ENCODE measurements at regions of chr14 and their contacts with region 1.

Region 1: GRCh38 chr14:95319312-95320021 is at the start of gene CLMN:
- DNase-seq: peak; percentile 64
- H3K4me3 Mint-ChIP-seq: peak within 1 kb of the TSS; percentile 97
- H3K27ac Mint-ChIP-seq: peak within 1 kb of the TSS; percentile 87
- H3K4me1 Mint-ChIP-seq: peaks cover 63% of the 10 kb centered on the region
- H3K27me3 Mint-ChIP-seq: no peaks in the 10 kb centered on the region
- CTCF ChIP-seq: no peak
- total RNA-seq, gene CLMN: 104 and 111 TPM in 2 replicates

Region 2: DNA sequence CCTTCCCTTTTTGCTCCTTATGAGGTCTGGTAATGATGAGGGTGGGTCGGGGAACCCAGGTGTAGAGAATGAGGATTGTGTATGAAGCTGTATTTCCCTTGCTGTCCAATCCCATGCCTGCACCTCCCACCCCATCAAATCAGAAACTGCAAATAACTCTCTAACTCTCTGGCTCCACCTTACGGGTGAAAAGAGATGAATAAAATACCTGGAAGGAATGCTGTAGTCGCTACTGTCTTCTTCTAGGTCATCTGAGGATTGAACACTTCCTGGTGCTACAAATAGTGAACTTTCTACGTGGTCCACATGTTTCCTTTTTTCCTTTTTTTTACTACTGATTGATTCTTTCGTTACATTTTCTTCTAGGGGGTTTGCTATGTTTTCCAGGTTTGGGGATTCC is 123.2 kb before region 1 on chr14:
- CTCF ChIA-PET with region 1: no interaction called
- intact Hi-C with region 1: loop called (anchors 10 kb)
- DNase-seq: no peak
- H3K4me3 Mint-ChIP-seq: no peak overlapping the region
- H3K27ac Mint-ChIP-seq: no peak overlapping the region
- H3K4me1 Mint-ChIP-seq: peaks cover 15% of the 10 kb centered on the region
- H3K27me3 Mint-ChIP-seq: no peaks in the 10 kb centered on the region
- CTCF ChIP-seq: no peak

Region 3: GRCh38 chr14:95265106-95266094 is 54.1 kb before region 1 on chr14:
- CTCF ChIA-PET with region 1: interaction called, 5 read pairs
- intact Hi-C with region 1: loop called (anchors 2 kb)
- DNase-seq: peak; percentile 84
- H3K4me3 Mint-ChIP-seq: peak overlapping the region; percentile 51
- H3K27ac Mint-ChIP-seq: peak overlapping the region; percentile 96
- H3K4me1 Mint-ChIP-seq: peaks cover 43% of the 10 kb centered on the region
- H3K27me3 Mint-ChIP-seq: no peaks in the 10 kb centered on the region
- CTCF ChIP-seq: no peak